Breast epithelium (tissue), 4 donors: ENCODE measurements at regions of chr3 and their contacts with region 1.

Region 1: DNA sequence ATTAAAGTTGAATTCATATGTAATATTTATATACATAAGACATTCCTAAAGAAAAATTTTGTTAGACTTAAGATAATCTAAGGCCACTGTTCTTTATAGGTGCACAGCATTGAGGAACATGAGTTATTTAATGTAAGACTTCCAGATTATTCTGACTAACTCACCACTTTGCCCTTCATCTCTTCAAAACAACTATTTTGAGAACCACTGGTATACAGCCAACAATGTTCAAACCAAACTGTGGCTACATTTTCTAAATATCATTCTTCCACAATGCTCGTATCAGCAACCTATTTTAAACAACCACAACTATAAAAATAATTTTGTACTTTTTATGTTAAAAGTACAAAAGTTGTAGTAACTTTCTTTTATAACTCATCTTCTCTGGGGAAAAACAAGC is 199.8 kb upstream of the ALCAM start:
- DNase-seq: no peak
- H3K4me3 ChIP-seq: no peak overlapping the region
- H3K27ac ChIP-seq: no peak overlapping the region
- H3K4me1 ChIP-seq: no peaks in the 10 kb centered on the region
- H3K27me3 ChIP-seq: no peaks in the 10 kb centered on the region
- CTCF ChIP-seq: no peak
- POLR2A ChIP-seq: no peak

Region 2: DNA sequence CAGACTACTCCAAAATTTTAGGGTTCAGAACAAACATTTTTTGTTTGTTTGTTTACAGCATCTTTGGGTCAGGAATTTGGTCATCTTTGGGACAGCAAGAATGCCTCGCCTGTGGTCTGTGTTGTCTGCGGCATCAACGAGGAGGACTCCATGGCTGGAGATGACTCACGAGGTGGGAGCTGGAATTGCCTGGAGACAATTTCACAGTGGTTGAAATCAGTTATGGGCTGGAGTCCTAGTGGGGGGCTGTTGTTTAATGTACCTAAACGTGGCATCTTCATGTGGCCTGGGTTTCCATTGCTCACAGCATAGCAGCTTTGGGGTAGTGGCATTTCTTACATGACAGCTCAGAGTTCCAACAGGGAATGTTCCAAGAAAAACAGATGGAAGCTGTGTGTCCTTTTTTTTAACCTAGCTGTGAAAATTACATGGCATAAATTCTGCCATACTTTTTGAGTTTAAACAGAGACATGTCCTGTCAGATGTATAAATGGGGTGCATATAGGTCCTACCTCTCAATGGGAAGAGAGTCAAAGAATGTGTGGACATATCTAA is 1209.2 kb after region 1 on chr3:
- intact Hi-C with region 1: loop called (anchors 10 kb)
- DNase-seq: no peak
- H3K4me3 ChIP-seq: no peak overlapping the region
- H3K27ac ChIP-seq: no peak overlapping the region
- H3K4me1 ChIP-seq: no peaks in the 10 kb centered on the region
- H3K27me3 ChIP-seq: no peaks in the 10 kb centered on the region
- CTCF ChIP-seq: no peak
- POLR2A ChIP-seq: no peak